Heart left ventricle (tissue), 16 donors: ENCODE measurements at regions of chr2 and their contacts with region 1.

Region 1: GRCh38 chr2:34105015-34105767 is 506.1 kb upstream of the FAM98A start:
- DNase-seq: no peak
- ATAC-seq: no peak
- H3K4me3 ChIP-seq: no peak overlapping the region
- H3K27ac ChIP-seq: no peak overlapping the region
- H3K4me1 ChIP-seq: no peaks in the 10 kb centered on the region
- H3K27me3 ChIP-seq: no peaks in the 10 kb centered on the region
- CTCF ChIP-seq: no peak
- POLR2A ChIP-seq: no peak

Region 2: DNA sequence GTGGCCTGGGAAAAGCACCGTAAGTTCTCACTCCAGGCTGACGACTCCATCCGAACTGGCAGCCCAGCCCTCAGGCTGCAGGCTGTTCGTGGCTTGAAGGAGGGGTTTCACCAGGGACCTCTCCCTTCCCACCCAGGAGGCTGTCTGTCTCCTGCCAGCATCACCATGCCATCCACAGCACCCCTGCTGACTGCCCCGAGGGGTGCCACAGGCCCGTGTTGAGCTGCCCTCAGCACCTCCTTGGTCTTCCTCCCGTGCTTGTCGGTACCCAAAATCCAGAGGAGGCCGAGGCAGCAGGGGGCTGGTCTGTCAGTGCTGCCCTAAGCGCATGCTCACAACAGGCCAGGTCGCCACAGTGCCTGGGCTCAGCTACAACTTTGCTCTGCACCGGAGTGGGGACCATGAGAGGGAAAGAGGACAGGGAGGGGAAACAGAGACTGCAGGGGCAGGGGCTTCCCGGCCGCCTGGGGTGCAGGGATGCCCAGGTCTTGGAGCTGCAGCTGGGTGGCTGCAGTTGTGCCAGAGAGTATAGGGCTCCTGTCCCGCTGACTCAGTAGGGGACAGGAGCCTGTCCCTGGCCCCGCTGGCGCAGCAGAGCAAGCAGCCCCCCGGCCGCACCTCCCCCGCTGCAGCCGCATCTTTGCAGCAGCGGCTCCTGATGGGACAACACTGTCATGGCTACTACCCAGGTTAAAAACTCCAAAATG is 1286.7 kb after region 1 on chr2:
- intact Hi-C with region 1: loop called in 1 of 10 experiments (anchors 10 kb)
- DNase-seq: no peak
- ATAC-seq: no peak
- H3K4me3 ChIP-seq: no peak overlapping the region
- H3K27ac ChIP-seq: no peak overlapping the region
- H3K4me1 ChIP-seq: no peaks in the 10 kb centered on the region
- H3K27me3 ChIP-seq: no peaks in the 10 kb centered on the region
- CTCF ChIP-seq: no peak
- POLR2A ChIP-seq: no peak